ENCODE measurements at regions of chrX and their contacts with region 1.

Region 1: DNA sequence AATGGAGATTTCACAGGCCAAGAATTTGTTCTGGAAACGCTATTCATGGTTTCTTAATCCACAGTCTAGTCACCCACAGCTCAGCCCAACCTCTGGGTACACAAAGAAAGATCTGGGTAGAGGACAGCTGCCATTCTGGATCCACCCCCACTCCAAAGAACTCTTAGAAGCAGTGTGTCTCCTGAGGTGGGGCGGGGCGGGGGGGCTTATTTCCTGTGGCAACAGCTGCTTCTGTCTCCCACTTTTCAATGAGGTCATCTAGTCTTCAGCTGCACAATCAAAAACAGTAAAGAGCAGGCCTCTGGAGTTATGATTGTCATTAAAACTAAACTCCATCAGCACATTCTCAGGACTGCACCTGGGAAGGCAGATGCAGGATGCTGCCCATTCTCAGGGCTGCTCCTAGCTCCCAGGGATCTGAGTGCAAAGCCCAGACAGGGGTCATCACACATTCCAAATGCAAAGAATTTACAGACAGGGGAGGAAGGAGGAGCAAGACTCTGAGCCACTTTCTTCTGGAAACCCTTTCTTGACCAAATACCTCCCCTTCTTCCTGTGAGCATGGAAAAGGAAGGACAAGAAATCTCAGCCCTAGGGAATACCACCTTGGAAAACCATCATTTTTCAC is 207.3 kb downstream of the HS6ST2 start:
- DNase-seq: no peak
- ATAC-seq: peak in 1 of 2 donors; percentile 42

Region 2: GRCh38 chrX:132692066-132692465 is 59.1 kb before region 1 on chrX:
- intact Hi-C with region 1: loop called in 1 of 2 experiments (anchors 10 kb)
- DNase-seq: peak; percentile 30
- ATAC-seq: peak in 1 of 2 donors; percentile 76

Region 3: DNA sequence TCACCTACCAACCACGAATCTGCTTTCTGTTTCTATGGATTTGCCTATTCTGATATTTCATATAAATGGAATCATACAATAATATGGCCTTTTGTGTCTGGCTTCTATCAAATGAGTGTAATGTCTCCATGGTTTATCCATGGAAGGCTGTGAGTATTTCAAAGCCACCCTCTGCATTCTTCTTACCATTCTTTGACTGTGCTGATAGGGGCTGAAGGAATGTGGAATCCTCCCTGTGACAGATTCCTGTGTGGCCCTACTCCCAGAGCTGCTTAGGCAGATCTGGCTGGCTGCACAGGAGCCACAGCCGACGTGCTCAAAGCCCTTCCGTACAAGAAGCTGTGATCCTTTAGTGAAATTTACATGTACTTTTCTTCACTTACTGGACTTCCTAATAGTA is 44.0 kb after region 1 on chrX:
- intact Hi-C with region 1: no loop called
- DNase-seq: no peak
- ATAC-seq: no peak

Region 4: GRCh38 chrX:132968296-132968949 is 217.2 kb after region 1 on chrX:
- intact Hi-C with region 1: no loop called
- DNase-seq: no peak
- ATAC-seq: no peak

Measured in left cardiac atrium (tissue), 4 donors.